AG04450 (cell line): ENCODE measurements at regions of chr2 and their contacts with region 1.

Region 1: DNA sequence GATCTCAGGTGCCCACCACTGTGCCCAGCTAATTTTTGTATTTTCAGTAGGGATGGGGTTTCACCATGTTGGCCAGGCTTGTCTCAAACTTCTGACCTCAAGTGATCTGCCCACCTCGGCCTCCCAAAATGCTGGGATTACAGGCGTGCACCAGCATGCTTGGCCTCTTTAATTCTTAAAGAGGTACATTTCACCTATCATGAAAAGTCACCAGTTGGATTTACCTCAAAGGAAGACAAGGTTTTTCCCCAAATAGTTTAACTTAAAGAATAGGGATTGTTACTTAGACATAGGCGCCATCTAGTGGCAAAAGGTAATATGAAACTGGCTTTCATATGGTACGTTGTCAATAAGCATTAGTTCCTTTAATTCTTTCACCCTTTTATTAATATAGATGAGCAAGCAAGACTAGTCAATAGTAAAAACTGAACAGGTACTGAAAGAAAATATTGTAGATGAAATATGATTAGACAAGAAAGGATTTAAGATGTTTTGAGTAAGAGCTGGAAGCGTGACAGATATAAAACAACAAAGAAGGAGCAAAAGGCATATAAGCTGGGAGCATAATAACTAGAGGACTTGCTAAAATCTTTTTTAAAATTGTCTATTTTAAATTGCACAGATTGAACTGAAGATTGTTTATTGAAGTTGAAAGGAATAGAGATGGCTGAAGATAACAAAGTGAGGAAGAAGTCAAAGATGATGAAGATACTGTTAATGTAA is 35.0 kb upstream of the PSMD14 start:
- DNase-seq: peak; percentile 34
- H3K4me3 ChIP-seq: no peak overlapping the region
- H3K27ac ChIP-seq: no peak overlapping the region
- H3K27me3 ChIP-seq: no peaks in the 10 kb centered on the region
- CTCF ChIP-seq: peak; percentile 66

Region 2: DNA sequence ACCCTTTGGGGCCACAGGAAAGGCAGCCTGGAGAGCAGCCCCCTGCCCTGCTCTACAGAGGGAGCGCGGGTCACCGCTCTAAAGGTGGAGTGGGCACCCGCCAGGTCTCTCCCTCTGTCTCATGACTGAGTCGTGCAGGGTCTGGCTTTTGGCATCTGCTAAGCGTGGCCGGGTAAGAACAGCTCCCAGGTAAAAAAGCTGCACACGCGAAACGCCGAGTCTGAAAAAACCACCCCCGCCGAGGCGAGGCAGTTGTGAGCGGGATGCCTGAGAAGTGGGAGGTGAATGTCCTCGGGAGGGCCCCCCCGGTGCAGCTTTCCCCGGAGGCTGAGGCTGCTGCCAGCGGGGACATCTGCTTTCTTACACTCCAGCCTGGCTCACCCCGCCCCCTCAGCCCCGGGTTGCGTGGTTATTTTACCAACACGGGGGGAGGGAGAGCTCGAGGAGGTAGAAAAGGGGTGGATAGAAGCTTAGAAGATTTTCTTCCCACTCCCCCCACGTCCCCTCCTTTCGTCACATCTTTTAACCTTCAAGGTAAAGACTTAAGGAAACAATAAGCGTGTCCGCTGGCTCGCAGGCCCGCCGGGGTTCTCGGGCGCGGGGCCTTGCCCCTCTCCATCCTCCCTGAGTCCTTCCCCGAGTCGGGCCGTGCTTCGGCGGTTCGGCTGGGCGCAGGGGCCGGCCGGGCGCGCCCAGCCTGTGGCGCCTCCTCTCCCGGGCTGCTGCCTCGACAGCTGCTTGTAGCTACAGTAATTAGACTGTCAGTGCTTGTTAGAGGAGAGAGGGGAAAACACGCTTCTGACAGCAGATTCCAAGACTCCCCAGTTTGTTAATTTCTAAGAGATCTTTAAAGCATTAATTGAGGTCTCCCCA is 35.6 kb before region 1 on chr2:
- CTCF ChIA-PET with region 1: interaction called, 15 read pairs
- POLR2A ChIA-PET with region 1: no interaction called
- DNase-seq: no peak
- H3K4me3 ChIP-seq: peak overlapping the region; percentile 69
- H3K27ac ChIP-seq: no peak overlapping the region
- H3K27me3 ChIP-seq: no peaks in the 10 kb centered on the region
- CTCF ChIP-seq: no peak

Region 3: DNA sequence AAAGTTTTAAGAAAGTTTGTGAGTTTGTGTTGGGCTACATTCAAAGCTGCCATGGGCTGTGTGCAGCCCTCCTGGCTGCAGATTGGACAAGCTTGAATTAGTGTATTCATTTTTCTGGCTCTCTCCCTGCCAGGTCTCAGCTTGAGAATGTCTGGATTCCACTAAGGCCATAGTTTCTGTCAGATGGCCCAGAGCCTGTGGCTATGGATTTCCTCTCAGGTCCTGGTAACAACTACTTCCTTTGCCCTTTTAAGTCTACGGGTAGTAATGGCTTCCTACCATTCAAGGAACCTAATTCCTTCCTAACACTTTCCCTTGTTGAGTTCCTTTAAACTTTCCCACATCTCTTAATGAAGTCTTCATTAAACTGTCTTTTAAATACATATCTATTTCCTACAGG is 10.7 kb after region 1 on chr2:
- CTCF ChIA-PET with region 1: interaction called, 10 read pairs
- POLR2A ChIA-PET with region 1: no interaction called
- DNase-seq: no peak
- H3K4me3 ChIP-seq: no peak overlapping the region
- H3K27ac ChIP-seq: no peak overlapping the region
- H3K27me3 ChIP-seq: peaks cover 6% of the 10 kb centered on the region
- CTCF ChIP-seq: no peak